Activated naive CD4-positive, alpha-beta T cell treated with anti-CD3 and anti-CD28 coated beads for 36 hours (primary cell): ENCODE measurements at regions of chr13 and their contacts with region 1.

Region 1: DNA sequence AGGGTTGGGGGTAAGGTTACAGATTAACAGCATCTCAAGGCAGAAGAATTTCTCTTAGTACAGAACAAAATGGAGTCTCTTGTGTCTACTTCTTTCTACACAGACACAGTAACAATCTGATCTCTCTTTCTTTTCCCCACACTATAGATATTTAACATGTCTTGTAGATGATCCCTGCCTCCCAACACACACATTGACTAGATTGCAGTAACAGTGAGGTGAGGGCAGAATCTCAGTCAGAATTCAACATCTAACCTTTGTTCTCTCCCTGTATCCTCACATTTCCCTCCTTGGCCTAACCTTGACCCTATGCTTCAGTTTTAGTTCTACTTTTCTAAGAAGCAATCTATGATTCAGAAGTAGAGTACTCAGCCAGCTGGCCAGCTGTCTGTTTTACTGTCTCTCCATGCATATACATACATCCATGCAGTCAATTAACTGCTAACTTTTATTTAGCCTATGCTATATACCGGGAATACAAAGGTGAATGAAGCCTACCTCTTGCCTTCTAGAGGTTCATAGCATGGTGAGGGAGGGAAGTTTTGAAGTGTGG is 18.1 kb downstream of the DNAJC15 start:
- DNase-seq: no peak
- H3K4me3 Mint-ChIP-seq: no peak overlapping the region
- H3K27ac Mint-ChIP-seq: no peak overlapping the region
- H3K4me1 Mint-ChIP-seq: peaks cover 64% of the 10 kb centered on the region
- H3K27me3 Mint-ChIP-seq: no peaks in the 10 kb centered on the region

Region 2: DNA sequence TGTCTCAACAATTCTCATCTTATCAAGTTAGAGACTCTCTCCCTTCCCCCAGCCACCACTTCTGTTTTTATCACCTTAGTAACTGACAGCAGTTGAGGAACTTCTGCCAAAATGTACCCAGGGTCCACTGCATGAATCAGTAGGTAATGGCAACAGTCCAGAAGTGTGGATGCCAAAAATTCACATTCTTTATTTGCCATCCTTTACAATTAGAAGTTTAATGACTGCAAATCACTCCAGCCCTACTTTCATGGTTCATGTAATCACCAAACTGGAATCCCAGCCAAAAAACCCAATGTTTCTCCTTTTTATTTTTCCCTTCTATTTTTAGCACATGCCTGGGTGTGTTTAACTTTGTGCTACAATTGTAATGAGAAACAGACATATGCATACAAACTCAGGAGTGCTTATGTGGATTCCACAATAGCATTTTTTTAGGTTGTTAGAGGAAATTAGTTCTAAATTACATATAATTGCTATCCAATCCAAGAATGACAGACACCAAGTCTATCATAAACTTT is 1340.6 kb before region 1 on chr13:
- CTCF ChIA-PET with region 1: no interaction called
- intact Hi-C with region 1: no loop called
- DNase-seq: no peak
- H3K4me3 Mint-ChIP-seq: no peak overlapping the region
- H3K27ac Mint-ChIP-seq: no peak overlapping the region
- H3K4me1 Mint-ChIP-seq: no peaks in the 10 kb centered on the region
- H3K27me3 Mint-ChIP-seq: no peaks in the 10 kb centered on the region

Region 3: DNA sequence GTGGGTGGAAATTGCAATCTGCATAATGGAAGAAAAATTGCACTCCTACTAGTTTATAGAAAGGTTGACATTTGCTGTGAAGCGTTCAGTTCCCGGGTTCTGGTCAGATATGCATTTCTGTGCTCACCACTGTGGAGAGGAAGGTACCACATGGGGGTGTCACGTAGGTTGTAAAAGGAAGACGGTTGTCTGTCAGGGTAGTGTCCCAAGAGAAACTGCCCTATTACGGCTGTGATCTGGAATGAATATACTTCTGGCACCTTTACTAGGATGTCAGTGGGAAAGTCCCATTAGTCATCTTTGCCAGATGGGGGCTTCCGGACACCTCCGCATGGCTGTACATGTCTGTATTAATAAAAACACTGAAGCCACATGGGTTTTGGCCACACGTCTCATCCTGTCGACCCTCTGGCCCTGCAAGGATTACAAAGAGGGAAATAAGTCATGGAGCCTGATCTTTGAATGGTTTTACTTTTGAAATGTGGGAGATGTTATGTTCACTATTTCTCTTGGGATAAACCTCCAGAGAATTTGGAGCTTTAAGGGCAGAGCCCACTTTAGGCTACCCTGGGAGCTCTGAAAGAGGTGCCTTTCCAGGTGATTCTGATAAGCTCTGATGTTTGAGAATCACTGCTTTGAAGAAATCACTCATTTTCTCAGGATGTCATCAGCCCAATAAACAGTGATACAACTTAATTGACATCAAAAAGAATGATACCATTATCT is 635.6 kb before region 1 on chr13:
- CTCF ChIA-PET with region 1: no interaction called
- intact Hi-C with region 1: loop called (anchors 10 kb)
- DNase-seq: peak; percentile 87
- H3K4me3 Mint-ChIP-seq: peak overlapping the region; percentile 51
- H3K27ac Mint-ChIP-seq: peak overlapping the region; percentile 96
- H3K4me1 Mint-ChIP-seq: peaks cover 41% of the 10 kb centered on the region
- H3K27me3 Mint-ChIP-seq: no peaks in the 10 kb centered on the region

Region 4: GRCh38 chr13:43023289-43023951 is 18.0 kb before region 1 on chr13 and contains the start of gene DNAJC15:
- CTCF ChIA-PET with region 1: interaction called, 5 read pairs
- intact Hi-C with region 1: loop called (anchors 1 kb)
- DNase-seq: peak; percentile 88
- H3K4me3 Mint-ChIP-seq: peak within 1 kb of the TSS; percentile 98
- H3K27ac Mint-ChIP-seq: peak within 1 kb of the TSS; percentile 94
- H3K4me1 Mint-ChIP-seq: peaks cover 30% of the 10 kb centered on the region
- H3K27me3 Mint-ChIP-seq: no peaks in the 10 kb centered on the region
- total RNA-seq, gene DNAJC15: 14.5 to 16.8 TPM

Region 5: DNA sequence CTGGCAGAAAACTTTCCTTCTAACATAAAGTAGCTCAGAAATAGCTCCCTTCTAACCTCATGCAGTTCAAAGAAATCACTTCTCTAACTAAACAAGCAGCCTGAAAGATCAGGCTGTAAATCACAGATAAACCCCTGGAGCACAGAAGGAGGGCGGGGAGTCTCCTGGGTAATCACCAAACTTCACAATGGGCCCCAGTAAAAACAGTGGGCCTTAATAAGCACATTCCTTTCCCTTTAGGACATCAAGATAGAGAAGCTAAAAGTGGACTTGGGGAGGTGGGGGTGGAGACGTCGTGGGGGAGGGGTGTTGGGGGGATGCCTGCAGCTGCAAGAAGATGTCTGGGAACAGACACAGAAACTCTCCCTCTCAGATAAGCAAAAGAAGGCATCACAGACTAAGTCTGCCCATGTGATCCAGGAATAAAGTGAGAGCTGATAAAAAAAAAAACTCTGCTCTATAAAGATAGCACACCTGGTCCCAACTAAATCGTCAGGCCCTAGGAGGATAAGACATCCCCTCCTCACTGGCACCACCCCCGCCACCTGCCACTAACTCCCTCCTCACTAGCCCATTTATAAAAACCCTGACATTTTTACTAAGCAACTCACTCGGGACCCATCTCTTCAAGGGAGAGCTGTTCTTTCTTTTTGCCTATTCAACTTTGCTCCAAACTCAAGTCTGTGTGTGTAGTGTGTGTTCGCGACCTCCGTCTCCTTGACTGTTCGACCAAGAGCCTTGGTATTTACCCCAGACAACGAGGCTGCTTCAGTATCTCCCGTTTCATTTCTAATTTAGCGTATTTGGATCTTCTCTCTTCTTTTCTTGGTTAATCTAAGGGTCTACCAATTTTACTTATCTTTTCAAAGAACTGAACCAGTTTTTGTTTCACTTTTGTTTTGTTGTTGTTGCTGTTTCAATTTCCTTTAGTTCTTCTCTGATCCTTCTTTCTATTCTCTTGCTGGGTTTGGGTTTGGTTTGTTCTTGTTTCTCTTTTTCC is 13.7 kb after region 1 on chr13:
- CTCF ChIA-PET with region 1: no interaction called
- intact Hi-C with region 1: loop called (anchors 1 kb)
- DNase-seq: peak; percentile 38
- H3K4me3 Mint-ChIP-seq: no peak overlapping the region
- H3K27ac Mint-ChIP-seq: no peak overlapping the region
- H3K4me1 Mint-ChIP-seq: peaks cover 33% of the 10 kb centered on the region
- H3K27me3 Mint-ChIP-seq: no peaks in the 10 kb centered on the region

Region 6: DNA sequence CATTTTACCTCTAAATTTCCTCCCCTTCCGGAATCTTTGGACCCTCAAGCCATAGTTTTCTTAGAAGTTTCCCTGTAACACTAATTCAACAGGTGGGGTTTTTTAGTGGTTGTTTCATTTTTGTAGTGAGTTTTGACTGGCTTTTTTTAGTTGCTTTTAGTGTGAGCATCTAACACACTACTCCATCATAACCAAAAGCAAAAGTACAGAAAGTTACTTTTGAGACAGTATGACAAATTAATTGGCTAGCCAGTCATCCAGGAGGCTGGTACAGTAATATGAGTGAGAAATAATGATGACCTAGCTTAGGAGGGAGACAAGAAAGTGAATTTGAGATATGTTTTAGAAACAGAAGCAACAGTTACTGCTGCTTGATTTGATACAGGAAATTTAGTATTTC is 53.5 kb after region 1 on chr13:
- CTCF ChIA-PET with region 1: no interaction called
- intact Hi-C with region 1: loop called (anchors 2 kb)
- DNase-seq: no peak
- H3K4me3 Mint-ChIP-seq: no peak overlapping the region
- H3K27ac Mint-ChIP-seq: peak overlapping the region; percentile 62
- H3K4me1 Mint-ChIP-seq: peaks cover 22% of the 10 kb centered on the region
- H3K27me3 Mint-ChIP-seq: no peaks in the 10 kb centered on the region

Region 7: DNA sequence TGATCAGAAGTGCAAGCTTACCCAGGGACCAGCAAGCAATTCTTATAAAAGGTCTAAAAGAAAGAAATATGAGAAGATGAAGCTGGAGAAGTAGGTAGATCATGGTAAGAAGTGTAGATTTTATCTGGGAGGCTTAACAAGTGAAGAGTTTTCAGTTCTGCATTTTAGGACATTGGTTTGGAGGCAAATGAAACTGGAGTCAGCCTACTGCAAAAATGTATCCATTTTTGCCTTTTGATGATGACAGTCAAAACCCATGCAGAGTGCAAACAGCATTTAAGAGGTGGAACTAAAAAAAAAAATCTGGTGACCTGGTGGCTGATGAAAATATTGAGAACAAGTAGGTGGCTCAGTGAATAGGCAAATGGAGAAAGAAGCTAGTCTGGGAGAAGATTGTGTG is 198.8 kb after region 1 on chr13:
- CTCF ChIA-PET with region 1: no interaction called
- intact Hi-C with region 1: no loop called
- DNase-seq: no peak
- H3K4me3 Mint-ChIP-seq: no peak overlapping the region
- H3K27ac Mint-ChIP-seq: no peak overlapping the region
- H3K4me1 Mint-ChIP-seq: no peaks in the 10 kb centered on the region
- H3K27me3 Mint-ChIP-seq: peaks cover 15% of the 10 kb centered on the region